Activated T-helper 1 cell treated with anti-CD3 and anti-CD28 coated beads, Interleukin-12 subunit alpha, Interleukin-12 subunit beta, Interleukin-2, Interleukin-4 antibody, amounts not matched to agents 30 ng/mL and 10 ng/mL and 1 ng/mL, durations not matched to agents 14 hours and 24 hours and 36 hours (primary cell): ENCODE measurements at regions of chr9 and their contacts with region 1.

Region 1: DNA sequence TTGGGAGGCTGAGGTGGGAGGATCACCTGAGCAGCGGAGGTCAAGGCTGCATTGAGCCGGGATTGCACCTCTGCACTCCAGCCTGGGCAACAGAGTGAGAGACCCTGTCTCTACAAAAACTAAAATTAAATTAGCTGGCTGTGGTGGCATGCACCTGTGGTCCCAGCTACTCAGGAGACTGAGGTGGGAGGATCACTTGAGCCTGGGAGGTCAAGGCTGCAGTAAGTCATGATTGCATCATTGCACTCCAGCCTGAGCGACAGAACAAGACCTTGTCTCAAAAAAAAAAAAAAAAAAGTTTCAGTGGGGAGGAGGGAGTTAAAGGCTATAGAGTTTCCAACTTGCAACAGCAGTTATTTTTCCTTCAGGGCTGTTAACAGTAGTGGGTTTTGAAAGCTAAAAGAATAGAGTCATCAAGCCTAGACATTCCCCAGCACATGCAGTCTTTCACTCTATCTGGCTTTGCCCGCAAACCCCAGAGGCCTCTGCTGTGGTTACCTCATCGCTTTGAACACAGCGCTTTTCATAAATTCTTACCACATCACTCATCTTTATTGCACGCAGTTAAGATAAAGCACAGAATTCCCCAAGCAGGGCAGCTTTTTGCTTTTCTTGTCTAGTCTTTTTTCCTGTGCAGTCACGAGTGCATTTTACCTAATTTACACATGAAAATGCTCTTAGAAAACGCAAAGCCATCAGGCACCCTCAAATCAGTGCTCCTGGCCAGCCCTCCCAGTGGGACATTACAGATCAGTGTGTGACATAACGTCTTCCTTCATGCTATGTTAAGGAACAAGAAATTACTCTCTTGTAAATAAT is 8.7 kb upstream of the SLC2A8 start:
- DNase-seq: peak; percentile 86
- H3K4me3 Mint-ChIP-seq: peak overlapping the region; percentile 37
- H3K27ac Mint-ChIP-seq: peak overlapping the region; percentile 89
- H3K4me1 Mint-ChIP-seq: peaks cover 24% of the 10 kb centered on the region
- H3K27me3 Mint-ChIP-seq: peaks cover 51% of the 10 kb centered on the region

Region 2: GRCh38 chr9:127004946-127005769 is 383.1 kb before region 1 on chr9:
- intact Hi-C with region 1: loop called (anchors 5 kb)
- DNase-seq: peak; percentile 75
- H3K4me3 Mint-ChIP-seq: peak overlapping the region; percentile 50
- H3K27ac Mint-ChIP-seq: peak overlapping the region; percentile 72
- H3K4me1 Mint-ChIP-seq: peaks cover 47% of the 10 kb centered on the region
- H3K27me3 Mint-ChIP-seq: peaks cover 10% of the 10 kb centered on the region

Region 3: DNA sequence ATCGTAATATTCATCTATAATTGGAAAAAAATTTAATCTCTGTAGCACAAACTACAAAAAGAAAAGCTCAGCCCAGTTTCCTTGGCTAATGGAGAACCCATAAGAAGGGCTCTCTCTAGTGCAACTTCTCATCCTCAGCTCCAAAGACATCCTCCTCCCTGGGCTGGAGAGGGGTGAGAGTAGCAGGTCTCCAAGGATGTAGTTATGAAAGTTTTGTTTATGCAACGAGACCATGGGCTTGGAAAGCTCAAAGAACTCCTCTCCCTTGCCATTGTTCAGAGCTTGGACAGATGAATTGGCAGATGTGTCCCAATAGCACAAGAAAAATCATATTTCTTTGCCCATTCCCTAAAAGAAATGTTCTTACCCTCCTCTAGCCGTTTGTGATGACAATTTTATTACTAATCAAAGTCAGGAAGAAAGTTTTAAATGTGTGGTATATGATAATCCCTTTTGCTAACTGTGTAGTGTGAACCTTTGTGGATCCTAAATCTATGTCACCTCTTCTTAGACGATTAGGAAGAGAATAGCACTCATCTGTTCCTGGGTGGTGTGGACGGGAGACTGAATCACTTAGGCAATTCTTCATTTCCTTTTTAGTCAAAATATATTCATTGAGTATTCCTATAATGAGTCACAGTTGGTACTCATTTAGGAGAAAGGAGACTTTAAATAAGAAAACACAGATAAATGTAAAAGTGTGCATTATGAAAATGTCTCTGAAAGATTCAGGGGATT is 71.5 kb before region 1 on chr9:
- intact Hi-C with region 1: loop called (anchors 2 kb)
- DNase-seq: no peak
- H3K4me3 Mint-ChIP-seq: no peak overlapping the region
- H3K27ac Mint-ChIP-seq: no peak overlapping the region
- H3K4me1 Mint-ChIP-seq: no peaks in the 10 kb centered on the region
- H3K27me3 Mint-ChIP-seq: peaks cover 16% of the 10 kb centered on the region

Region 4: GRCh38 chr9:127444283-127444920 is 56.2 kb after region 1 on chr9:
- intact Hi-C with region 1: no loop called
- DNase-seq: no peak
- H3K4me3 Mint-ChIP-seq: no peak overlapping the region
- H3K27ac Mint-ChIP-seq: peak overlapping the region; percentile 66
- H3K4me1 Mint-ChIP-seq: peaks cover 32% of the 10 kb centered on the region
- H3K27me3 Mint-ChIP-seq: no peaks in the 10 kb centered on the region

Region 5: GRCh38 chr9:127694890-127695720 is 306.9 kb after region 1 on chr9:
- intact Hi-C with region 1: no loop called
- DNase-seq: no peak
- H3K4me3 Mint-ChIP-seq: no peak overlapping the region
- H3K27ac Mint-ChIP-seq: no peak overlapping the region
- H3K4me1 Mint-ChIP-seq: peaks cover 11% of the 10 kb centered on the region
- H3K27me3 Mint-ChIP-seq: no peaks in the 10 kb centered on the region

Region 6: GRCh38 chr9:127802576-127803443 is 414.6 kb after region 1 on chr9 and contains the start of gene FPGS:
- intact Hi-C with region 1: no loop called
- DNase-seq: peak; percentile 74
- H3K4me3 Mint-ChIP-seq: peak within 1 kb of the TSS; percentile 97
- H3K27ac Mint-ChIP-seq: peak within 1 kb of the TSS; percentile 93
- H3K4me1 Mint-ChIP-seq: peaks cover 17% of the 10 kb centered on the region
- H3K27me3 Mint-ChIP-seq: no peaks in the 10 kb centered on the region
- total RNA-seq, gene FPGS: 128 and 130 TPM in 2 replicates

Region 7: GRCh38 chr9:128007566-128008138 is 619.4 kb after region 1 on chr9:
- intact Hi-C with region 1: loop called (anchors 5 kb)
- DNase-seq: peak; percentile 68
- H3K4me3 Mint-ChIP-seq: peak overlapping the region; percentile 65
- H3K27ac Mint-ChIP-seq: peak overlapping the region; percentile 93
- H3K4me1 Mint-ChIP-seq: peaks cover 29% of the 10 kb centered on the region
- H3K27me3 Mint-ChIP-seq: peaks cover 3% of the 10 kb centered on the region